ENCODE measurements at regions of chr13 and their contacts with region 1.

Region 1: DNA sequence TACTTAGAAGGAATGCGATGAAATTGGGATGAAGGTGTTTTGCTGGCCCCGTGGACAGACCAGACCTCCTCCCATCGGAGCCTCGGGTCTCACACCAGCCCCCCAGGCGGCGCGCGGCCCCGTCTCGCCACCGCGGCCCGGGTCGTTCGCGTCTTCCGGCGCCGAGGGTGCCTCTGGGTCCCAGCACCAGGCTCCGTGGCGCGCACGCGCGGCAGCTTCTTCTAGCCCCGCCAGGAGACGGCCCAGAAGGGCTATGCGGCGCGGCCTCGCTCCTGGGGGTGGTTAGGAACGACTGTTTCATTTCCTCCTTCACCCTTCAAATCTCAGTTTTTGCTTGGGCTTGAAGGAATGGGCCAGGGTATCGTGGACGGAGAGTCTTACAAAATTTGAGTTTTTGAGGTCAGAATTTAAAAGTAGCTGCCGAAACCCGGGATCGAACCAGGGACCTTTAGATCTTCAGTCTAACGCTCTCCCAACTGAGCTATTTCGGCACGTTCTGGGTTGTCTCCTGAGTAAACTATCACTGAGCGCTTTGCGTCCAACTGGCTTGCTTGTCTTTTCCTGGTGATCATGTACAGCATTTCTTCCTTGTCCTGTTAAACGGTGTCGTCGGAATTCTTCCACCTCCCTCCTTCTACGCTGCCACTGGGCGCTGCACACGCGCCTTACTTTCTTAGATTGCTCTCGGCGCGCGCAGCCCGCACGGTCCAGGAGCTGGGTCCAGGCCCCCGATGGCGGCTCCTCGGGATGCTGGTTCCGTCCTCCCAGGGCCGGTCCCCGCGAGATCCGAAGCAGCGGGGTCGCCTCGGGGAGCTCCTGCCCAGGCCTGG is 46.5 kb downstream of the TGDS start:
- H3K4me3 ChIP-seq: peak overlapping the region; percentile 70
- H3K27ac ChIP-seq: peak overlapping the region; percentile 91
- H3K4me1 ChIP-seq: no peaks in the 10 kb centered on the region
- CTCF ChIP-seq: peak; percentile 23; the same call in 1 of the 2 replicates

Region 2: GRCh38 chr13:94595950-94596574 is 46.6 kb after region 1 on chr13 and contains the start of gene TGDS:
- CTCF ChIA-PET with region 1: no interaction called
- POLR2A ChIA-PET with region 1: interaction called, 28 read pairs
- H3K4me3 ChIP-seq: peak within 1 kb of the TSS; percentile 85
- H3K27ac ChIP-seq: peak within 1 kb of the TSS; percentile 32; the same call in 1 of the 2 replicates
- H3K4me1 ChIP-seq: no peaks in the 10 kb centered on the region
- CTCF ChIP-seq: no peak

Region 3: DNA sequence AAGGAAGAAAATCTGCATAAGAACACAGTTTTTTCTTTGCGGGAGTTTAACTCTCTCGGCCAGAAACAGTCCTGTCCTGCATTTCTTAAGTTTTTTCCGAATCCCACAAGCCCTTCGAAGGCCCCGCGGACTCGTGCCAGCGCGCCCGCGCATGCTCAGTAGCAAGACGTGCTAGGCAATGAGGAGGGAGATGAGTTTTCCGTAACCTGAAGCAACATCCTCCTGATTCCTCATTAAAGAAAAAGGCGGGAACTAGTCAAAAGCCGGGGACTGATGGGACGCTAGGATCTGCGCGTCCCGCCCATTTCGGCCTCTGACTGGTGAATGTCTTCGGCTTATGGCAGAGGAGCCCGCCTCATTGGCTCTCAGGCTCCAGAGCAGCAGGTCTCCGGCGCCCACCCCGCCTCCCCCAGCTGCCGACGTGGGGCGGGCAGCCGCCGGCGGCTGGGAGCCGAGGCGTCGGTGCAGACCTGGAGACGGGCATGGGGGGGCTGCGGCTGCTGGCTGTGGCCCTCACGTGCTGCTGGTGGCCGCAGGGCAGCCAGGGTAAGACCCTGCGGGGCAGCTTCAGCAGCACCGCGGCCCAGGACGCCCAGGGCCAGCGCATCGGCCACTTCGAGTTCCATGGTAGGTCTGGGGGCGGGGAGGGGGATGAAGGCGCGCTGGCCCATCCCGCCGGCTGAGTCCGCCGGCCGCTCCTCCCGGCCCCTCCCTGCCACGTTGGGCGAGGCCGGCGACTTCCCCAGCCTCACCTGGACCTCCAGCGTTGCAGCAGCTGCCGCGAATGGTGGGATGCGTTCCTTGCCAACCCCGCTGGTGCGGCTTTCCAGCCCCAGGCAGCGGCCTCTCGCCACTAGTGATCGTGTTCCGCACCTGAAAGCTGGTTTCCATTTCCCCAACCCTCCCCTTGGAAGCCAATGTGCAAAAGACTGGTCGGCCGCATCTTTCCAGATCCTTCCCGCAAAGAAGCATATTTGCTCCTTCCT is 52.3 kb after region 1 on chr13 and contains the start of gene GPR180:
- CTCF ChIA-PET with region 1: interaction called, 3 read pairs
- POLR2A ChIA-PET with region 1: interaction called, 28 read pairs
- H3K4me3 ChIP-seq: peak within 1 kb of the TSS; percentile 77
- H3K27ac ChIP-seq: peak within 1 kb of the TSS; percentile 35; the same call in 1 of the 2 replicates
- H3K4me1 ChIP-seq: no peaks in the 10 kb centered on the region
- CTCF ChIP-seq: no peak

Measured in HEK293 (cell line).